Activated naive CD4-positive, alpha-beta T cell treated with anti-CD3 and anti-CD28 coated beads for 36 hours (primary cell): ENCODE measurements at regions of chr7 and their contacts with region 1.

Region 1: DNA sequence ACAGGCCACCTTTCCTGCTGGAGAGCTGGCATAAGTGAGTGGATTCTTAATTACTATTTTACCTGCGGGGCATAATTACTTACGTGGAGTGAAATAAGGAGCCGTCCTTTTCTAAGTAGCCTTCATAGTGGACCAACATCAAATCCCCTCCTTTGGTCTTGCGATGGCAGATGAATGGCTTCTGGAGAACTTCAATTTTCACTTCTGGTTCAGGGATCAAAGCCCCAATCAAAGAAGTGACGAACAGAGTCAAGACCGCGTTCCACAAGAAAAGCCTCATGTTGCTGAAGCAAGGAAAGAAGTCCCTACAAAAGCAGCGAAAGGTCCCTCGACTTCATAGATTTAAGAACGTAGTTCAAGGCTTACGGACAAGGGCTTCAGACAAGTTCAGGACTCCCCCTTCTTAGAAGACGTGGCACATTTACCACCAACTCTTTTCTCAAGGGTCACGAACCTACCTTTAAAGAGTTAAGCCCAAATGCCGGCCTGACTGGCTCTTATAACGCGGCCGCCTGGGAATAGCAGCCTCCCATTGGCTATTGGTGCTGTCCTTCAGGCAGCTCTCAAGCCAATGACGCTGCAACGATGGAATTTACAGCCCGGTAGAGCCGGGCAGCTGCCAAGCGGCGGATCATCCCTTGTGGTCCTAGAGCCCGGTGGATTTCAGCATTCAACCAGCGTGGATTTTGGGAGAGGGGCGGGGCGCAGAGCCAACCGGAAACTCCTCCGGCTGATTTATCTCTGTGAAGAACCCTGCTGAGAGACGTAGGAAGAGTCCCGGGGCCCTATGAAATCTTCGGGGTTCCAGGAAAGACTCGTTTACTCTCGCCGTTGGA is at the start of gene FKBP14:
- DNase-seq: peak; percentile 96
- H3K4me3 Mint-ChIP-seq: no peak within 1 kb of the TSS
- H3K27ac Mint-ChIP-seq: peak within 1 kb of the TSS; percentile 75
- H3K4me1 Mint-ChIP-seq: peaks cover 27% of the 10 kb centered on the region
- H3K27me3 Mint-ChIP-seq: no peaks in the 10 kb centered on the region
- total RNA-seq, gene FKBP14: 4.7 to 5.2 TPM

Region 2: DNA sequence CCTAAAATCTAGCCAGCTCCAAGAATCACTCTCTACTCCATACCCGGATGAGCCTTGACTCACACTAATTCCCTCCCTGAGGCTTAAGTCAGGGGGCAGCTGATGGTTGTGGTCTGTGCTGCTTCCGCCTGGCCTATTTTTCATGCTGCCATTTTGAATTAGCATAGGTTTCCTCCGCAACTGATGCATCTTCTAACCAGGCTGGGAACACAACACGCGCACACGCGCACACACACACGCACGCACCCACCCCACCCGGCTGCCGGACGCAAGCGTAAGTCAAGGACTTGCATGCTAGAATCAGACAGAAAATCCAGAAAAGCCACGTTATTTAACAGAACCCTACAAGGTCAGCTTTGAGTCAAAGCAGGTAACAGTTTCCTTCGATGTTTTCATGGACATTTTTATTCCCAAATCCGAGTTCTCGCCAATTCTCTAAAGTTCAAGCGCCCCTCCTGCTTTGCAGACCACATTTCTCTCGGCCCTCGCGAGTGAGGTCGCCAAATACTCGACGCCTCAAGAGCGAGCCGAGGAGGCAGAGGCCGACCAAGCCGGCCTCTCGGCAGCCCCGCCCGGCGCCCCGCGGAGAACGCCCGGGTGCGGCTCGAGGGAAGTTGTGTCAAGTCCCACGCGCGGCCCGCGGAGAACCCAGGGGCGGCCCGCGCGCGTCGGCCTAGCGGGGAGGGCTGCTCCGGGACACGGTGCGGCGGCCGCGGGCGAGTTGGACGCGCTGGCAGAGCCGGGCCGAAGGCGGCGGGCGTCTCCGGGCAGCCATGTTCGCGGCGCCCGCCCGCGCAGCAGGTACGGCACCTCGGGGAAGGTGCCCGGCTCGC is 37.8 kb before region 1 on chr7:
- CTCF ChIA-PET with region 1: no interaction called
- intact Hi-C with region 1: loop called (anchors 1 kb)
- DNase-seq: peak; percentile 21
- H3K4me3 Mint-ChIP-seq: peak overlapping the region; percentile 72
- H3K27ac Mint-ChIP-seq: no peak overlapping the region
- H3K4me1 Mint-ChIP-seq: peaks cover 9% of the 10 kb centered on the region
- H3K27me3 Mint-ChIP-seq: peaks cover 45% of the 10 kb centered on the region

Region 3: GRCh38 chr7:30134611-30135545 is 108.4 kb after region 1 on chr7 and contains the start of gene MTURN:
- CTCF ChIA-PET with region 1: no interaction called
- intact Hi-C with region 1: loop called (anchors 1 kb)
- DNase-seq: peak; percentile 83
- H3K4me3 Mint-ChIP-seq: peak within 1 kb of the TSS; percentile 87
- H3K27ac Mint-ChIP-seq: peak within 1 kb of the TSS; percentile 56
- H3K4me1 Mint-ChIP-seq: no peaks in the 10 kb centered on the region
- H3K27me3 Mint-ChIP-seq: no peaks in the 10 kb centered on the region
- total RNA-seq, gene MTURN: 5.1 to 6.3 TPM

Region 4: GRCh38 chr7:30284298-30285066 is 258.0 kb after region 1 on chr7 and contains the start of gene ZNRF2:
- CTCF ChIA-PET with region 1: no interaction called
- intact Hi-C with region 1: loop called (anchors 1 kb)
- DNase-seq: peak; percentile 99
- H3K4me3 Mint-ChIP-seq: peak within 1 kb of the TSS; percentile 79
- H3K27ac Mint-ChIP-seq: peak within 1 kb of the TSS; percentile 84
- H3K4me1 Mint-ChIP-seq: peaks cover 39% of the 10 kb centered on the region
- H3K27me3 Mint-ChIP-seq: no peaks in the 10 kb centered on the region
- total RNA-seq, gene ZNRF2: 10.4 to 10.5 TPM

Region 5: DNA sequence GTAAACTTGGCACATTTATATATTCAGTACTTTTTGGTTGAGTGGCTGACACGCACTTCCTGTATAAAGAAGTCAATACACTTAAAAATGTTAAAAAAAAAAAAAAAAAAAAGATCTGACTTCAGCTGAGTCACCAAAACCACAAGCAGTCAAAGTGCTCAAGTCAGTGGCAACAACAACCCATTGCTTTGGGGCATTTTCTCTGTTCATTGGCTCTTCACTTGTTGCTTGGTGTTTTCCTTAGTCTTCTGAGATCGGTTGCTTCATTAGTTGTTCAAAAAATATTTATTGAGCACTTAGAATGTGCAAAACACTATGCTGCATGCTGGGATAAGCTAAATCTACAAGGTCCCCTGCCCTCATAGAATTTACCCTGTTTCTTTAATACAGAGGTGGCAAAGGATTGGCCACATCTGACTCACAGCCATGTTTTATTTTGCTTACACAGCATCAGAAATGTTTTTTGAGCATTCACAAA is 321.7 kb after region 1 on chr7:
- CTCF ChIA-PET with region 1: no interaction called
- intact Hi-C with region 1: loop called (anchors 2 kb)
- DNase-seq: peak; percentile 67
- H3K4me3 Mint-ChIP-seq: peak overlapping the region; percentile 50
- H3K27ac Mint-ChIP-seq: peak overlapping the region; percentile 86
- H3K4me1 Mint-ChIP-seq: peaks cover 52% of the 10 kb centered on the region
- H3K27me3 Mint-ChIP-seq: no peaks in the 10 kb centered on the region

Region 6: DNA sequence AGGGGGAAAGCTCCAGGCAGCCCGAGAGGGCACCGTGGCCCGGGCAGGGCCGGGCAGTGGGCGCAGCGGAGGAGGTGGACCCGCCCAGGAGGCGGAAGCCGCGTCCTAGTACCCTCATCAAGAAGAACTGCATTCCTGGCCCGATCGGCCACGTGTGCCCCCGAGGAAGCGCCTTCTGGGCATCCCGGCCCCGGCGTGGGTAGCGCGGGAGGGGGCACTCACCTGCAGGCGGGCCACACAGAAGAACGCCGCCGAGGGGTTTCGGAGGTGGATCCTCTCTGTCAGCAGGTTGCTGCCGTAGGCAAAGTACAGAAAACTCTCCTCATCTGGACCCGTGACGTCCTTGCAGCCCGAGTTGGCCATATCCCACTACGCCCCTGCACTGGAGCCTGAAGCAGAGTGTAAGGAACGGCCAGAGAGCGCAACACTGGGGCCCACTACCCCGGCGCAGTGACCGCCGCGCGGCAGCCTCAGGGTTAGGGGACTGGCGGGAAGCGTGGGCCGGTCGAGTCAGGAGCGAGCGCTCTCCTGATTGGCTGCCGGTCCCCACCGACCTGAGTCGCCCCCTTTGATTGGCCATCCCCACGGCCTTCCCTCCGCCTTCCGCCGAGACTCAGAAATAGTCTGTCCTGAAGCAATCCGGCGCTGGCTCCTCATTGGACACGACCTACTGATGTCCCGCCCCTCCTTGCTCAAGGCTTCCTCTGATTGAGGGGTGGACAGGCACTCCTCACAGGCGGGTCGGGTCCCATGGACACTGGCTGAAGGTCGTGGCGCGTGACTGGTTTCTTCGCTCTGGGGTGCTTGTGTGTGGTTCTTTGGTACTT is 478.1 kb after region 1 on chr7 and contains the start of gene GGCT:
- CTCF ChIA-PET with region 1: no interaction called
- intact Hi-C with region 1: loop called (anchors 2 kb)
- DNase-seq: peak; percentile 99
- H3K4me3 Mint-ChIP-seq: peak within 1 kb of the TSS; percentile 82
- H3K27ac Mint-ChIP-seq: peak within 1 kb of the TSS; percentile 85
- H3K4me1 Mint-ChIP-seq: peaks cover 38% of the 10 kb centered on the region
- H3K27me3 Mint-ChIP-seq: no peaks in the 10 kb centered on the region
- total RNA-seq, gene GGCT: 83.0 to 83.8 TPM

Region 7: GRCh38 chr7:30771174-30771879 is 744.9 kb after region 1 on chr7 and contains the start of gene MINDY4:
- CTCF ChIA-PET with region 1: no interaction called
- intact Hi-C with region 1: loop called (anchors 2 kb)
- DNase-seq: peak; percentile 75
- H3K4me3 Mint-ChIP-seq: peak within 1 kb of the TSS; percentile 78
- H3K27ac Mint-ChIP-seq: peak within 1 kb of the TSS; percentile 28
- H3K4me1 Mint-ChIP-seq: peaks cover 9% of the 10 kb centered on the region
- H3K27me3 Mint-ChIP-seq: no peaks in the 10 kb centered on the region
- total RNA-seq, gene MINDY4: 1.2 to 1.4 TPM